ENCODE measurements at regions of chr6 and their contacts with region 1.

Region 1: DNA sequence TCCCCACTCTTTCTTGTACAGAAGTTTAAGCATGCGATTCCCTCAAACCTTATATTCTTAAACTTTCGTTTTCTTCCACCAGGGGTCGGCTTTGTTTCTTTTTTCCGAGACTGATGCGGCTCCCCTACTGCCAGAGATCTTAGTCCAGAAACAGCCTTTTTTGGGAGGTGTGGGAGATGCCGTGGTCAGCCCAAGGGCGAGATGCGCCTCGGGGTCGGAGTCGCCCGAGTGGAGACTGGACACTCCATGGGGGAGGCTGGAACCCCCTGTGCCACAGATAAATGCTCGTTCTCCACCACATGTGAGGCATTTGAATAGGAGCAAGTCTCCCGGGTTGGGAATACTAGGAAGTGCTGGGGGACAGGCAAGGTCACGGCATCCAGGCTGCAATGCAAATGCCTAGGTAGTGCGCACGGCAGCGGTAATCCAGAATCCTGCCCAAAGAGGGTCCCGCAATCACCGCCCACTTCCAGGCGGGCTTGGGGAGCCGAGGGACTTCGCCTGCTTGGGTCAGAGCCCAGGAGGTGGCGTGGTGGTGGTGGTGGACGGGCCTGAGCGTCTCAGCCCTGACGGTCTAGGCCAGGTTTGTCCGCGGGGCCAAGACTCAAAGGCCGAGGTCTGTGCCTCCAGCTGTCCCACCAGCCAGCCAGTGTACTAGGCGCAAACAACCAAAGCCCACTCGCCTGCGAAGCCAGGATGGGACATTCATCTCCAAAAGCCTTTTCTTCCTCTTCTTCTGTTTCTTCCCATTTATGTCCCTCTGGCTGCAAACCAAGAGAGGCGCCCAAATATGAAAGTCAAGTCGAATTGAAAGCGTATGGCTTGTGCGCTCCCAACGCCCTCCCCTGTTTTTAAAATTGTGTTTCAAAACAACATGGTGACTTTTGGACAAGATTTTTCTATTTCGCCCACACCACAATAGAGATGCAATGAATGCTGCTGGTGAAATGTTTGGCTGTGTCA is 39.3 kb upstream of the OSTM1 start:
- DNase-seq: peak; percentile 50 to 65 (median 53)
- H3K4me3 ChIP-seq: peak overlapping the region in 6 of 7 experiments; percentile 15 to 74 (median 55)
- H3K27ac ChIP-seq: no peak overlapping the region
- H3K4me1 ChIP-seq: peaks cover 4 to 47% (median 39%) of the 10 kb centered on the region in 4 experiments
- H3K27me3 ChIP-seq: peaks cover 6 to 93% (median 50%) of the 10 kb centered on the region in 5 experiments

Region 2: GRCh38 chr6:108052706-108053105 is 61.1 kb before region 1 on chr6:
- CTCF ChIA-PET with region 1: no interaction called
- POLR2A ChIA-PET with region 1: no interaction called
- DNase-seq: no peak
- H3K4me3 ChIP-seq: no peak overlapping the region
- H3K27ac ChIP-seq: no peak overlapping the region
- H3K4me1 ChIP-seq: no peaks in the 10 kb centered on the region
- H3K27me3 ChIP-seq: no peaks in the 10 kb centered on the region

Region 3: DNA sequence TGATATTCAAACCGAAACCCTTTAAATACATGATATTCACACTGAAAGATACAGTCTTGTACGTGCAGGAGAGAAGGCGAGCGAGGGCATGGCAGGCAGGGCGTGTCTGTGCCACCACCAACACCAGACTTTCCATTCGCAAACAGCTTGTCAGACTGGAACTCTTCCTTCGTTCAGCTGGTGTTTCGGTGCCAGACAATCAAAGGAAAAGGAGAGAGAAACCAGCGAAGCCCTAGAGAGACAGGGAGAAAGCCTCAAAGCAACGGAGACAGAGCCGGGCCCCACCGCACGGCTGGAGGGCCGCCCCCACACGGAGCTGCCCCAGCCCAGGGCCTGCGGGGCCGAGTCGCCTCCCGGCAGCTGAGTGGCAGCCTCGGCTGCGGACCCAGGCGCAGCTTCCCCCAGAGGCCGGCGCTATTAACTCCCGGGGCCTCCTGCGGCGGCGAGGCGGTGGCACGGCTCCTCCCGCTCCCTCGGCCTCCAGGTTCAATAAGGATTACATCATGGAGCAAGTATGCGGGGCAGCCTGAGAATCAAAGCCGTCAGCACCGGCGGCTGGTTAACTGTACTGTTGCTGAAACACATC is 19.8 kb after region 1 on chr6:
- CTCF ChIA-PET with region 1: interaction called, 11 read pairs
- POLR2A ChIA-PET with region 1: no interaction called
- DNase-seq: peak in 2 of 3 donors; percentile 48 to 64
- H3K4me3 ChIP-seq: peak overlapping the region in 5 of 7 experiments; percentile 26 to 76 (median 48)
- H3K27ac ChIP-seq: no peak overlapping the region
- H3K4me1 ChIP-seq: peaks cover 0 to 14% (median 7%) of the 10 kb centered on the region in 4 experiments
- H3K27me3 ChIP-seq: peaks cover 26 to 95% (median 42%) of the 10 kb centered on the region in 5 experiments

Region 4: GRCh38 chr6:108165714-108166663 is 52.2 kb after region 1 on chr6 and contains the start of gene NR2E1:
- CTCF ChIA-PET with region 1: interaction called, 10 read pairs
- POLR2A ChIA-PET with region 1: interaction called, 3 read pairs
- DNase-seq: peak in 2 of 3 donors; percentile 57 to 65
- H3K4me3 ChIP-seq: peak within 1 kb of the TSS in 3 of 7 experiments; percentile 7 to 51 (median 11)
- H3K27ac ChIP-seq: no peak within 1 kb of the TSS
- H3K4me1 ChIP-seq: peaks cover 0 to 49% (median 41%) of the 10 kb centered on the region in 4 experiments
- H3K27me3 ChIP-seq: peaks cover 19 to 100% (median 78%) of the 10 kb centered on the region in 5 experiments

Region 5: GRCh38 chr6:108250240-108250866 is 136.5 kb after region 1 on chr6:
- CTCF ChIA-PET with region 1: no interaction called
- POLR2A ChIA-PET with region 1: no interaction called
- DNase-seq: peak; percentile 49 to 66 (median 65)
- H3K4me3 ChIP-seq: no peak overlapping the region
- H3K27ac ChIP-seq: no peak overlapping the region
- H3K4me1 ChIP-seq: peaks cover 8 to 31% (median 23%) of the 10 kb centered on the region in 4 experiments
- H3K27me3 ChIP-seq: no peaks in the 10 kb centered on the region

Region 6: GRCh38 chr6:108492131-108492766 is 378.4 kb after region 1 on chr6:
- CTCF ChIA-PET with region 1: interaction called, 42 read pairs
- POLR2A ChIA-PET with region 1: no interaction called
- DNase-seq: peak; percentile 57 to 68 (median 64)
- H3K4me3 ChIP-seq: no peak overlapping the region
- H3K27ac ChIP-seq: no peak overlapping the region
- H3K4me1 ChIP-seq: no peaks in the 10 kb centered on the region
- H3K27me3 ChIP-seq: no peaks in the 10 kb centered on the region

Region 7: GRCh38 chr6:108497883-108498282 is 384.0 kb after region 1 on chr6:
- CTCF ChIA-PET with region 1: interaction called, 42 read pairs
- POLR2A ChIA-PET with region 1: no interaction called
- DNase-seq: peak; percentile 41 to 70 (median 64)
- H3K4me3 ChIP-seq: no peak overlapping the region
- H3K27ac ChIP-seq: no peak overlapping the region
- H3K4me1 ChIP-seq: peaks cover 0 to 5% (median 0%) of the 10 kb centered on the region in 4 experiments
- H3K27me3 ChIP-seq: no peaks in the 10 kb centered on the region

Region 8: DNA sequence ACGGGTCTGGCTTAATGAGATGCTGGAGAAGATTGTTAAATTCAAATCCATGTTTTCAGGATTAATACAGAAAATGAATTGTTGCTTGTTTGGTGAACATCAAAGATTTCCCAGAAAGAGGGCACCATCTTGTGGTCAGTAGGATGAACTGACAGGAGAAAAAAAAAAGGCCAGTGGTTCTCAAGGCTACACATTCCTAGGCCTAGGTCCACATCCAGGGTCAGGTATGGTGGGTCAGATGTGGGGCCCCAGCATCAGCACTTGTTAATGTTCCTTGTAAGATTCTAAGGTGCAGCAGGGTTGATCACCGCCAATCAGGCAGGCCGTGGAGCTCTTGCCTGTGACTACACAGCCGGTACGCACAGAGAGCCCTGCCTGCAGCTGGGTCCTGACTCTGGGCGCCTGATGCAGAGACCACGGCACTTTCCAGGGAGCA is 412.9 kb after region 1 on chr6:
- CTCF ChIA-PET with region 1: interaction called, 14 read pairs
- POLR2A ChIA-PET with region 1: no interaction called
- DNase-seq: peak; percentile 42 to 65 (median 64)
- H3K4me3 ChIP-seq: no peak overlapping the region
- H3K27ac ChIP-seq: no peak overlapping the region
- H3K4me1 ChIP-seq: peaks cover 0 to 2% (median 0%) of the 10 kb centered on the region in 4 experiments
- H3K27me3 ChIP-seq: peaks cover 0 to 2% (median 0%) of the 10 kb centered on the region in 5 experiments